ENCODE measurements at regions of chr6 and their contacts with region 1.

Region 1: DNA sequence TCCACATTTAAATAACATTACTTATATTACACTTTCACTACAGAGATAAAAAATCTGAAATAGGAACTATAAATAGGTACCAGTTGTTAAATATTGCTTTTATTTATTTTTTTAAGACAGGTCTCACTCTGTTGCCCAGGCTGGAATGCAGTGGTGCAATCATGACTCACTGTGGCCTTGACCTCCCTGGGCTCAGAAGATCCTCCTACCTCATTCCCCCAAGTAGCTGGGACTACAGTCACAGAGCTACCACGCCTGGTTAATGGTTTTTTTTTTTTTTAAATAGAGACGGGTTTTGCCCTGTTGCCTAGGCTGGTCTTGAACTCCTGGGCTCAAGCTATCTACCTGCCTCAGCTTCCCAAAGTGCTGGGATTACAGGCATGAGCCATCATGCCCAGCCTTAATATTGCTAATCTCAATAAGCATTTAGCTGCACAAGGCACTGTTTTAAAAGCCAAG is 17.3 kb downstream of the EEF1E1 start:
- DNase-seq: no peak

Region 2: GRCh38 chr6:7865781-7866180 is 219.3 kb before region 1 on chr6:
- intact Hi-C with region 1: no loop called
- DNase-seq: no peak

Region 3: GRCh38 chr6:7969361-7969760 is 115.7 kb before region 1 on chr6:
- intact Hi-C with region 1: no loop called
- DNase-seq: no peak

Region 4: DNA sequence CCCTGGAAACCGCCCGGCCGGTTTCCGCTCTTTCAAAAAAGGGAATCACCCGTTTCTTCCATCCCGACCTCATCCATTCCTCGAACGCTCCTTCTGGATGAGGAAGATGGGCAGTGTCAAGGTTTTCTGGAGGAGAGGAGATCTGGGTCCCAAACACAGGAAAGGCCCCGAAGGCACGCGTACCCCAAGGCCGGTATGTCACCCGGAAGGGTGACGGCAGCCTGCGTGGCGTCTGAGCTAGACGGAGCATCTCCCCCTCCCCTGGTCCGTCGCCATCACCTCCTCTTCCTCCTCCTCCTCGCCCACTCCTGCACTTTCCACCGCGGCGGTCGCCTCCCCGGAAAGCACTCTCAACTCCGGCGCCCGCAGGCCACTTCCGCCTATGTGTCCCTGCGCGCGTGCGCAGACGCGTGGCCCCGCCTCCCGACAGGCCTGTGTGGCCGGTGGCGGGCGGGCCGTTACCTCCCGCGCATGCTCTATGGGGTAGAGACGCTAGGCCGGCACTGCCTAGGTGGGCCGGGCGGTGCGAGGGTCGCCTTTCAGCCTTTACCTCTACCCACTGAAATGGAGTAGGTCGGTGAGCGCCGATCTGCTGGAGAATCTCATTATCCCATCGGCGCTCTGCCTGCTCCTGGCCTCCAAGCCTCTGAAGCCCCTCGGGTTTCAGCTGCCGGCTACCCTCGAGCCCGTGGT is 350.2 kb after region 1 on chr6 and contains the start of gene SLC35B3:
- intact Hi-C with region 1: loop called (anchors 10 kb)
- DNase-seq: peak; percentile 98
- total RNA-seq, gene SLC35B3: 6.6 TPM